Heart left ventricle (tissue), 16 donors: ENCODE measurements at regions of chr11 and their contacts with region 1.

Region 1: DNA sequence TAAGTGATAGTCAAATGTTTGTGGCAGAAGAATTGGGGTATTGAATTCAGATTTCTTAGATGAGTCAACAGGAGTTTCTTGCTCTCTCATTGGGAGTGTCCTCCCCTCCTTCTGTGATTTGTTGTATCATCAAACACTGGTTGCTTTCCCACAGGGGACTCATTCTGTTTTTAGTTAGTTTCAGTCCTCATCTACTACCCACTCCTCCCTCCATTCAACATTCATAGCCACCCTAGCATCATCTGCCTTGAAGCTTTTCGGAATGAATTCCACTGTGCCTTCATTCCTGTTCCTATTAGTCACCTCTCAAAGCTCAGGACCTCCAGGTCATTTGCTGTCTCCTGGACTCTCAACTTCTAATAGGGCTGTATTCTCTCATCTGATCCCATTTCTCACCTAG is 31.5 kb upstream of the RAB38 start:
- DNase-seq: no peak
- ATAC-seq: no peak
- H3K4me3 ChIP-seq: no peak overlapping the region
- H3K27ac ChIP-seq: no peak overlapping the region
- H3K4me1 ChIP-seq: peaks cover 0 to 5% (median 0%) of the 10 kb centered on the region in 12 donors
- H3K27me3 ChIP-seq: no peaks in the 10 kb centered on the region
- CTCF ChIP-seq: no peak
- POLR2A ChIP-seq: no peak

Region 2: DNA sequence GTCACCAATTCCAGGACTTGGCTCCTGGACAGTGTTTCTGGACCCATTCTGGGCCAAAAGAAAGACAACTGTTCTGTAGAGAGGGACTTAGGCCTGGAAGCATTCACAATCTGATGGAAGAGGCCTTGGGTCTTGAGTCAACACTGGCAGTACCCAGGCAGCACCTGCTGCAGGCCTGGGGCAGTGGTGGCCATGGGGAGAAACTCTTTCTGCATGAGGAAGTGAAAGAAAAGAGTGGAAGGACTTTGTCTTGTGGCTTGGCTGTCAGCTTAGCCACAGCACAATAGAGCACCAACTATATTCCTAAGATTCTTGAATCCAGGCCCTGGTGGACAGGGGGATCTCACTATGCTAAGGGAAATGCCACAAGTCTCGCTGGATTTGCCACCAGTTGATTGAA is 60.2 kb after region 1 on chr11:
- intact Hi-C with region 1: loop called in 1 of 10 experiments (anchors 10 kb)
- DNase-seq: no peak
- ATAC-seq: no peak
- H3K4me3 ChIP-seq: no peak overlapping the region
- H3K27ac ChIP-seq: no peak overlapping the region
- H3K4me1 ChIP-seq: no peaks in the 10 kb centered on the region
- H3K27me3 ChIP-seq: no peaks in the 10 kb centered on the region
- CTCF ChIP-seq: no peak
- POLR2A ChIP-seq: no peak